Aorta (tissue), 5 donors: ENCODE measurements at regions of chr17 and their contacts with region 1.

Region 1: DNA sequence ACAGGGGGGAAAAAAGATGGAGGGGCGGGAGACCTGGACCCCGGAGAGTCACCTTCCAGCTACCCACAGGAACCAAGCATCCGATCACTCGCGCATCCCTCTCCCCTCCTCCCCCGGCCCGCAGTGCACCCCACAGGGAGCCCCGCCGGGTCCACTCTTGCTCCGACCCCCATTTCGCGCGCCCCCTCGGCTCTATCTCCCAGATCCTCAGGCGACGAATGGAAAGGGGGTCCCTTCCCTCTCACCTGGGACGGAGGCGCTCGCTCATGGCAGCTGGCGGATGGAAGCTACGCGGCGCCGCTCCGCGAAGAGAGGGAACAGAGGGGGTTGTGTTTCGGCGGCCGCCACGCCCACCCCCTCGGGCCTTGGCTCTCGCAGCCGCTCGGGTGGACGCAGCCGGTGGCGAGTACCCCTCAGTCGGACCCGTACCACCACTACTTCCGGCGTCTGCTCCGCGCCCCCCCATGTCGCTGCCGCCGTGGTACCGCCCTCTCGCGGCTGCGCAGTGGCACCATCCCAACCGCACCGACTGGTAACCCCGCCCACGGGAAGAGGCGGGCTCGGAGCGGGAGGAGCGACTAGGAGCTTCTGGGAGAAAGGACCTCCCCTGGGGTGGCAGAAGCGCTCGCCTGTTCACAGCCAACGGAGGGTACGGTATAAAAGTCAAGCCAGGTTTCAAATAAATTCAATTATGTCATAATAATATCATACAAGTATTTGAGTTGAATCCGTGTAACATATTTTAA is 29.7 kb downstream of the CPSF4L start:
- DNase-seq: peak; percentile 97 to 99
- ATAC-seq: peak; percentile 98
- H3K4me3 ChIP-seq: peak overlapping the region; percentile 95 to 97
- H3K27ac ChIP-seq: peak overlapping the region in 1 of 2 donors; percentile 49
- H3K4me1 ChIP-seq: peaks cover 0 to 8% of the 10 kb centered on the region in 2 donors
- H3K27me3 ChIP-seq: no peaks in the 10 kb centered on the region

Region 2: DNA sequence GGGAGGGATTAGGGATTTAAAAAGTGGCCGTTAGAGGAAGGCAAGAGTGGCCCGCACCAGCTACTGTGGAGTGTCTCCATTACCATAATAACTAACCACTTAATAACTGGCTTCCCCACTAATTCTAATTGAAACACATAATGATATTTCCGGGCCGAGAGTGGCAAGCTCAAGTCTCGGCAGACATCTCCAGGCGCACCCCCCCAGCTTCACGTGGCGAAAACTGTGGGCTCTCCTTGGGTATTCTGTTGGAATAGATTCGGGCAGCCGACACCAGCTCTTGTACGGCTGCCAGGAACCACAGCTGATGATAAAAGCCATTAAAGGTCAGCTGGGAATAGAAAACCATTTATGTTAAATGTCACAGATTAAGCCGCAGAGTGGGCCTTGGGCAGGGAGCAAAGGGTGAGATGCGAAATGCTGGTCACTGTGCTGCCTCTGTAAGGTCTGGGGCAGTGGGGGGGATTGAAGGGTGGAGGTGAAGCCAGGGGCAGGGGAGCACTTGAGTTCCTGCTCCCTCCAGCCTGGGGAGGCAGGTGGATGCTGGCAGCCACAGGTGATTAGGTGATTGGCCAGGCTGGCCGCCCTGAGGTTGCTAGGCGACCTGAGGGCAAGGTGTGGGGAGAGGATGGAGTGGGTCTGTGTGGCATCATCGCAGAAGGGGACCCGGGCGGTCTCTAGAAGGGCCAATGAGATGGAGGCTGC is 527.9 kb after region 1 on chr17:
- intact Hi-C with region 1: loop called in 1 of 2 experiments (anchors 10 kb)
- DNase-seq: no peak
- ATAC-seq: no peak
- H3K4me3 ChIP-seq: no peak overlapping the region
- H3K27ac ChIP-seq: no peak overlapping the region
- H3K4me1 ChIP-seq: no peaks in the 10 kb centered on the region
- H3K27me3 ChIP-seq: no peaks in the 10 kb centered on the region